ENCODE measurements at regions of chr22 and their contacts with region 1.

Region 1: GRCh38 chr22:28829358-28830181 is 29.2 kb upstream of the XBP1 start:
- DNase-seq: peak; percentile 36
- ATAC-seq: peak; percentile 92
- H3K4me3 ChIP-seq: no peak overlapping the region
- H3K27ac ChIP-seq: no peak overlapping the region
- H3K4me1 ChIP-seq: no peaks in the 10 kb centered on the region
- H3K27me3 ChIP-seq: no peaks in the 10 kb centered on the region
- CTCF ChIP-seq: peak; percentile 70 to 99 (median 98)
- POLR2A ChIP-seq: no peak
- RAD21 ChIP-seq: peak; percentile 88

Region 2: GRCh38 chr22:28600546-28601143 is 228.9 kb before region 1 on chr22:
- CTCF ChIA-PET with region 1: interaction called, 57 read pairs
- POLR2A ChIA-PET with region 1: no interaction called
- RAD21 ChIA-PET with region 1: interaction called in 1 of 2 experiments, 5 read pairs
- intact Hi-C with region 1: loop called (anchors 1 kb)
- DNase-seq: peak; percentile 24
- ATAC-seq: peak; percentile 58
- H3K4me3 ChIP-seq: no peak overlapping the region
- H3K27ac ChIP-seq: no peak overlapping the region
- H3K4me1 ChIP-seq: no peaks in the 10 kb centered on the region
- H3K27me3 ChIP-seq: no peaks in the 10 kb centered on the region
- CTCF ChIP-seq: peak; percentile 12 to 53 (median 52); a peak in 4 of 6 replicates
- POLR2A ChIP-seq: no peak
- RAD21 ChIP-seq: peak; percentile 74

Region 3: GRCh38 chr22:28817919-28818909 is 11.4 kb before region 1 on chr22:
- CTCF ChIA-PET with region 1: interaction called, 12 read pairs
- POLR2A ChIA-PET with region 1: no interaction called
- RAD21 ChIA-PET with region 1: no interaction called
- intact Hi-C with region 1: no loop called
- DNase-seq: no peak
- ATAC-seq: no peak
- H3K4me3 ChIP-seq: no peak overlapping the region
- H3K27ac ChIP-seq: no peak overlapping the region
- H3K4me1 ChIP-seq: peaks cover 3 to 9% of the 10 kb centered on the region in 2 experiments; a peak in 1 of 4 replicates
- H3K27me3 ChIP-seq: no peaks in the 10 kb centered on the region
- CTCF ChIP-seq: no peak
- POLR2A ChIP-seq: no peak
- RAD21 ChIP-seq: no peak

Region 4: GRCh38 chr22:28935713-28936112 is 106.1 kb after region 1 on chr22:
- CTCF ChIA-PET with region 1: no interaction called
- POLR2A ChIA-PET with region 1: no interaction called
- RAD21 ChIA-PET with region 1: no interaction called
- intact Hi-C with region 1: no loop called
- DNase-seq: no peak
- ATAC-seq: peak; percentile 79
- H3K4me3 ChIP-seq: no peak overlapping the region
- H3K27ac ChIP-seq: no peak overlapping the region
- H3K4me1 ChIP-seq: peaks cover 30 to 36% of the 10 kb centered on the region in 2 experiments
- H3K27me3 ChIP-seq: no peaks in the 10 kb centered on the region
- CTCF ChIP-seq: peak in 2 of 3 experiments; percentile 54 to 60; a peak in 4 of 6 replicates
- POLR2A ChIP-seq: no peak
- RAD21 ChIP-seq: no peak